ENCODE measurements at regions of chr20 and their contacts with region 1.

Region 1: DNA sequence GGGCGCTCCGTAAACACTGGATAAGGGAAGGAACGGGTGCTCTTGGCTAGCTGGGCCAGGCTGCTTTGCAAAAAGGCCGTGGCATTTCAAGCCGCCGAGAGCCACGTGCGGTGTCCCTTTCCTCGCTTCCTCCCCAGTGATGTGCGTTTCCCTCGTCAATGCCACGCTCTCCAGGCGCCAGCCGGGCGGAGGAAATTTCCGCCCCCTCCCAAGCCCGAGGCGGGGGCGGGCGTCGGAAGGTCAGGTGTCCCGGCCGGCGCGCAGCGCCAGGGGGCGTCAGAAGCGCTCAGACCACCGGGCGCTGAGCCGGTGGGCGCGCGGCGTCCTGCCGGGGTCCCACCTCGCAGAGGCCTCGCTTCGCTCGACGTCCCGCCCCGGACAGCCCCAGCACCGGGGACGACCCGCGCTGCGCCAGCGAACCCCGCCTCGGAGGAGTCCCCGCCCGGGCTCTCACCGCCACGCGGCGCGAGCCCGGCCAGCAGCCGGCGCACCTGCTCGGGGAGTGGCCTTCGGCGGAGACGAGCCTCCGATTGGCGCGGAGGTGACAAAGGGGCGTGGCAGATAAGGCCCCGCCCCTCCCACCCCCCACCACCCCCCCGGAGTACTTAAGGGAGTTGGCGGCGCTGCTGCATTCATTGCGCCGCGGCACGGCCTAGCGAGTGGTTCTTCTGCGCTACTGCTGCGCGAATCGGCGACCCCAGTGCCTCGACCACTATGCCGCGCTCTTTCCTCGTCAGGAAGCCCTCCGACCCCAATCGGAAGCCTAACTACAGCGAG is at the start of gene SNAI1:
- DNase-seq: peak; percentile 79
- H3K4me3 Mint-ChIP-seq: peak within 1 kb of the TSS; percentile 59
- H3K27ac Mint-ChIP-seq: peak within 1 kb of the TSS; percentile 67
- H3K4me1 Mint-ChIP-seq: peaks cover 4% of the 10 kb centered on the region
- H3K27me3 Mint-ChIP-seq: peaks cover 26% of the 10 kb centered on the region
- total RNA-seq, gene SNAI1: 3.5 and 3.9 TPM in 2 replicates

Region 2: DNA sequence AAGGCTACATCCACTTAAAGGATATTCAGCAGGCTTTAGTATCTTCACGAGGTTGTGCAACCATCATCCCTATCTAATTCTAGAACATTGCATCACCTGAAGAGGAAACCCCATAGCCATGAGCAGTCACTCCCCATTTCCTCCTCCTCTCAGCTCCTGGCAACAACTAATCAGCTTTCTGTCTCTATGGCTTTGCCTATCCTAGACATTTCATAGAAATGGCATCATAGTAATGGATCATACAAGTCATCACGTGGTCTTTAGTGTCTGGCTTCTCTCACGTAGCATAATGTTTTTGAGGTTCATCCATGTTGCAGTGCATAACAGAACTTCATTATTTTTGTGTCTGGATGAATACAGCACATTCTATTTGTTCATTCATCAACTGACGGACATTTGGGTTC is 20.7 kb after region 1 on chr20:
- intact Hi-C with region 1: loop called (anchors 1 kb)
- DNase-seq: no peak
- H3K4me3 Mint-ChIP-seq: no peak overlapping the region
- H3K27ac Mint-ChIP-seq: peak overlapping the region; percentile 3
- H3K4me1 Mint-ChIP-seq: peaks cover 16% of the 10 kb centered on the region
- H3K27me3 Mint-ChIP-seq: peaks cover 6% of the 10 kb centered on the region

Region 3: GRCh38 chr20:50058747-50059404 is 76.3 kb after region 1 on chr20:
- intact Hi-C with region 1: no loop called
- DNase-seq: no peak
- H3K4me3 Mint-ChIP-seq: no peak overlapping the region
- H3K27ac Mint-ChIP-seq: no peak overlapping the region
- H3K4me1 Mint-ChIP-seq: no peaks in the 10 kb centered on the region
- H3K27me3 Mint-ChIP-seq: peaks cover 7% of the 10 kb centered on the region

Region 4: GRCh38 chr20:50085452-50086365 is 103.2 kb after region 1 on chr20:
- intact Hi-C with region 1: loop called (anchors 5 kb)
- DNase-seq: peak; percentile 25
- H3K4me3 Mint-ChIP-seq: peak overlapping the region; percentile 45
- H3K27ac Mint-ChIP-seq: peak overlapping the region; percentile 56
- H3K4me1 Mint-ChIP-seq: peaks cover 22% of the 10 kb centered on the region
- H3K27me3 Mint-ChIP-seq: no peaks in the 10 kb centered on the region

Region 5: DNA sequence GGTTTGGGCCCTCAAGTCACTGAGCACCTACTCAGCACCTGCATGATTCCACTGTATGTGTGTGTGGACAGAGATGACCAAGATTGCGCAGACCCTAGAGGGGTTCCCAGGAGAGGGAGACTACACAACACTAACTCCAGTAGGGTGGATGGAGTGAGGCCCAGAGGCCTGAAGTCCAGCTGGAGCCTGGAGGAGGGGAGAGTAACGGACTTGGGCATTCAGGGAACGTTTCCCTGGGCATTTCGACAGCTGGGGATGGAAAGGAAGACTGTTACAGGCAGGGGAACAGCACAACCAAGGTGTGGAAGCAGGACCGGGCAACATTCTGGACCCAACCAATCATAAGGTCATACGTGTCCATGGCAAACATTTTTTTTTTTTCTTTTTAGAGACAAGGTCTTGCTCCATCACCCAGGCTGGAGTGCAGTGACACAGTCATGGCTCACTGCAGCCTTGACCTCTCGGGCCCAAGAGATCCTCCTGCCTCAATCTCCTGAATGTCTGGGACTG is 197.0 kb after region 1 on chr20:
- intact Hi-C with region 1: loop called (anchors 1 kb)
- DNase-seq: no peak
- H3K4me3 Mint-ChIP-seq: no peak overlapping the region
- H3K27ac Mint-ChIP-seq: no peak overlapping the region
- H3K4me1 Mint-ChIP-seq: no peaks in the 10 kb centered on the region
- H3K27me3 Mint-ChIP-seq: peaks cover 13% of the 10 kb centered on the region

Region 6: DNA sequence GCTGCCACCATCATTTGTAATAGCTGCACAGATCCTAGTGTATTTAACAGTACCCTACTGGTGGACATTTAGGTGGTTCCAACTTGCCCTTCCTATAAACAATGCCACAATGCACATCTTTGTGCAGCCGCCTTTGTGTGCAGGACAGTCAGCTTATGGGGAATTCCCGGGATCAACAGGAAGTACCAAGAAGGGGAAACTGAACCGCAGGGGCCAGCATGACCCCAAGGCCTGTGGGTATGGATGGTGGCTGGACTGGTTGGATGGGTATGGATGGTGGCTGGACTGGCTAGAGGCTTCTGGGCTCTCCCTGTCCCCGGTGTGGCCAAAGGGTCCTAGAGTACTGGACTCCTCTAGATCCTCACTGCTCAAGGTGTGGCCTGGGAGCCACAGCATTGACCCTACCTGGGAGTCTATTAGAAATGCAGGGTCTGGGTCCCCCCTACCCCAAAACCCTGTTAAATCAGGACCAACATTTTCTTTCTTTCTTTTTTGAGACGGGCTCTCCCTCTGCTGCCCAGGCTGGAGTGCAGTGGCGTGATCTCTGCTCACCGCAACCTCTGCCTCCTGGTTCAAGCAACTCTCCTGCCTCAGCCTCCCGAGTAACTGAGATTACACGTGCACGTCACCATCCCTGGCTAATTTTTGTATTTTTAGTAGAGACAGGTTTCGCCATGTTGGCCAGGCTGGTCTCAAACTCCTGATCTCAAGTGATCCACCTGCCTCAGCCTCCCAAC is 255.0 kb after region 1 on chr20:
- intact Hi-C with region 1: no loop called
- DNase-seq: no peak
- H3K4me3 Mint-ChIP-seq: no peak overlapping the region
- H3K27ac Mint-ChIP-seq: no peak overlapping the region
- H3K4me1 Mint-ChIP-seq: peaks cover 16% of the 10 kb centered on the region
- H3K27me3 Mint-ChIP-seq: peaks cover 6% of the 10 kb centered on the region

Measured in activated T-helper 1 cell treated with anti-CD3 and anti-CD28 coated beads, Interleukin-12 subunit alpha, Interleukin-12 subunit beta, Interleukin-2, Interleukin-4 antibody, amounts not matched to agents 30 ng/mL and 10 ng/mL and 1 ng/mL, durations not matched to agents 14 hours and 24 hours and 36 hours (primary cell).